ENCODE measurements at regions of chr10 and their contacts with region 1.

Region 1: DNA sequence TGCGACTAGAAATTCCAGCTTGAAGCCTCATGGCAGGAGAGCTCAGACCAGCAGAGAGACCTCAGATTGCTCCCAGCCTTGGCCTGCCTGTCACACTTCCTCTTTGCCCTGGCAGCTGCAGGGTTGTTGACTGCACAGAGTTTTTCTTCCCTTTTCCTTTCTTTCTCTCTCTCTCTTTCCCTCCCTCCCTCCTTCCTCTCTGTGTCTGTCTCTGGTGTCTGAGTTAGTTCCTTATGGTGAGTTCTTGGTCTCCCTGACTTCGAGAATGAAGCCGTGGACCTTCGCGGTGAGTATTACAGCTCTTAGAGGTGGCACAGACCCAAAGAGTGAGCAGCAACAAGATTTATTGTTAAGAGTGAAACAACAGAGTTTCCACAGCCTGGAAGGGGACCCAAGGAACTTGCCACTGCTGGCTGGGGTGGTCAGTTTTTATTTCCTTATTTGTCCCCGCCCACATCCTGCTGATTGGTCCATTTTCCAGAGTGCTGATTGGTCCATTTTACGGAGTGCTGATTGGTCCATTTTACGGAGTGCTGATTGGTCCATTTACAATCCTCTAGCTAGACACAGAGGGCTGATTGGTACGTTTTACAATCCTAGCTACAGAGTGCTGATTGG is 266.3 kb downstream of the RPS24 start:
- DNase-seq: no peak
- ATAC-seq: no peak
- H3K4me3 ChIP-seq: no peak overlapping the region
- H3K27ac ChIP-seq: peak overlapping the region in 2 of 4 donors; percentile 41 to 60
- H3K4me1 ChIP-seq: peaks cover 0 to 11% (median 0%) of the 10 kb centered on the region in 3 donors
- H3K27me3 ChIP-seq: no peaks in the 10 kb centered on the region
- CTCF ChIP-seq: no peak

Region 2: GRCh38 chr10:78623578-78624215 is 323.7 kb after region 1 on chr10:
- intact Hi-C with region 1: no loop called
- DNase-seq: peak in 2 of 6 donors; percentile 19 to 31
- ATAC-seq: peak; percentile 68 to 90 (median 84)
- H3K4me3 ChIP-seq: no peak overlapping the region
- H3K27ac ChIP-seq: peak overlapping the region in 2 of 4 donors; percentile 50 to 57
- H3K4me1 ChIP-seq: peaks cover 0 to 23% (median 4%) of the 10 kb centered on the region in 3 donors
- H3K27me3 ChIP-seq: no peaks in the 10 kb centered on the region
- CTCF ChIP-seq: no peak

Region 3: DNA sequence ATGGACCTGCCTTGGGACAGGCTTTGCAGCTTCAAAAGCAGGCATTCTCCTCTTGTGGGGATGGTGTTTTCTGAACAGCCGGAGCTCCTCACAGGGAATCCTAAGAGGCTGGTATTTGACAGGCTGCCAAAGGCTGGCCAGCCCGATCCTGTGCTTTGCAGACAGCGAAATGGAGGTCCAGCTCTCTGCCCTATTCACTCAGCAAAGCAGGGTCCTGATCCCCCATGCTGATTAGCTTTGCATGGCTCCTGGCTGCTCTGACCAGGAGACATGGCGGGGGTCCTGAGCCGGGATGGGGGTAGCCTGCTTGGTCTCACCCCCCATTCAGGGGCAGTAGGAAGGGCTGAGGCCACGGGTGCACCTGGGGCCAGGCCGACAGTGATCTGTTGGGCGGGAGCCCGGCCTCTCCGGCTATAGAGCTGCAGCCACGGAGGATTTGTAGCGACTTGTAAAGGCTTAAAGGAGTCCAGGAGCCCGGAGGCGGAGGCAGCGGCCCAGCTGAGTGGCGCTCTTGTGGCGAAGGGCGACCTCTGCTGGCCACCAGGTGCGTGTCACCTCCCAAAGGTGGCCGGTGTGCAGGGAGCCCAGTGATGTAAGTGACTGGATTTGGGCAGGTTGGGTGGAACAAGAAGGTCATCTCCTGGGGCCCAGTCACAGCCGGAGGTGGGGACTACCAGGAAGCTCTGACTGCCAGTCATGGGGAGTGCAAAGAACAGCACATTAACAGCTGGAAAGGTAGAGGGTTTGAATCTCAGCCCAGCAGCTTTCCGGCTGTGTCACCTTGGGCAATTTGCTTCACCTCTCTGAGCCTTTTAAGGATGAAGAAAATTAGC is 895.3 kb after region 1 on chr10:
- intact Hi-C with region 1: loop called in 1 of 3 experiments (anchors 10 kb)
- DNase-seq: peak; percentile 79 to 94 (median 90)
- ATAC-seq: peak; percentile 91 to 95 (median 93)
- H3K4me3 ChIP-seq: no peak overlapping the region
- H3K27ac ChIP-seq: peak overlapping the region in 3 of 4 donors; percentile 28 to 48 (median 35)
- H3K4me1 ChIP-seq: peaks cover 6 to 11% (median 7%) of the 10 kb centered on the region in 3 donors
- H3K27me3 ChIP-seq: no peaks in the 10 kb centered on the region
- CTCF ChIP-seq: peak; percentile 94 to 99 (median 96)

Measured in pancreas (tissue), 10 donors.